ENCODE measurements at regions of chr22 and their contacts with region 1.

Region 1: DNA sequence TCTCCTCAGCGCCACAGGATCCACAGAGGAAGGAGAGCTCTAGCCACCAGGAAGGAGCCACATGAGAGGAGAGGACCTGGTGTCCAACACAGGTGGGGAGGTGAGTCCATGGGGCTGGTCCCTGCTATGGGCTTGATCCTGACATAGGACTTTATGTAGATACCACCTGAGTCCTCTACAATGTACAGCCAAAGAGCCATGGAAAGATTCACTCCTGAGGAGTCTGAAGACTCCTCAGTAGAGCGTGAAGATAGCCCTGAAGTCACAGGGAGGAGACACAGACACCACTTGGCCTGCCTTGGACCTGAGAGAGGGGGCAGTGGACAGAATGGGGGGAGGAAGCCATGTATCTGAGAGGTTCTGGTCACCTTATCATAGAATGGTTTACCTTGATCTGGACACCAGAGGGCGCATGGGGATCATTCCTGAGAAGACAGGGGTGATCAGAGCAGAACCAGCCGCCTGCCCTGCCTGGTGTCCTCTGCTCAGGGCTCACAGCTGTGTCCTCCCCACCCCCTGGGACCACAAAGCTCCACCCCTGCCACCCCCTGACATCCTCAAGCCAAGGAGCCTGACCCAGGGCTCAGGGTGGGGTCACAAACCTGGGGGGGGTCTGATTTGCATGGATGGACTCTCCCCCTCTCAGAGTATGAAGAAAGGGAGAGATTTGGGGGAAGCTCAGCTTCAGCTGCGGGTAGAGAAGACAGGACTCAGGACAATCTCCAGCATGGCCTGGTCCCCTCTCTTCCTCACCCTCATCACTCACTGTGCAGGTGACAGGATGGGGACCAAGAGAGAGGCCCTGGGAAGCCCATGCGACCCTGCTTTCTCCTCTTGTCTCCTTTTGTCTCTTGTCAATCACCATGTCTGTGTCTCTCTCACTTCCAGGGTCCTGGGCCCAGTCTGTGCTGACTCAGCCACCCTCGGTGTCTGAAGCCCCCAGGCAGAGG is 77.0 kb downstream of the ZNF280B start:
- DNase-seq: no peak
- ATAC-seq: peak; percentile 97
- H3K4me3 ChIP-seq: no peak overlapping the region
- H3K27ac ChIP-seq: no peak overlapping the region
- H3K4me1 ChIP-seq: no peaks in the 10 kb centered on the region
- H3K27me3 ChIP-seq: no peaks in the 10 kb centered on the region
- CTCF ChIP-seq: peak; percentile 46 to 62 (median 62)
- EP300 ChIP-seq: no peak
- POLR2A ChIP-seq: no peak
- RAD21 ChIP-seq: peak; percentile 61

Region 2: DNA sequence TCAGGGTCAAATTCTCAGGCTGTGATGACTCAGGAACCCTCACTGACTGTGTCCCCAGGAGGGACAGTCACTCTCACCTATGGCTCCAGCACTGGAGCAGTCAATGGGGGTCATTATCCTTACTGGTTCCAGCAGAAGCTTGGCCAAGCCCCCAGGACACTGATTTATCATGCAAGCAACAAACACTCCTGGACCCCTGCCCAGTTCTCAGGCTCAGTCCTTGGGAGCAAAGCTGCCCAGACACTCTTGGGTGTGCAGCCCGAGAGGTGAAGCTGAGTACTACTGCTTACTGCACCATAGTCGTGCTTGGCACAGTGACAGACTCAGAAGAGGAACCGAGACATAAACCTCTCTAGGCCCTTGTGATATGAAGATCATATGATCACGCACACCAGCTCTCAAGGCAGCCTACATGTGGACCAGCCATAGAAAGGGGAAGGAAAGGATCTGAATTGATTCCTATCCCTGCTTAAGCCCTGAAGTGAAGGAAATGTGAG is 18.8 kb after region 1 on chr22:
- CTCF ChIA-PET with region 1: interaction called, 15 read pairs
- POLR2A ChIA-PET with region 1: no interaction called
- RAD21 ChIA-PET with region 1: interaction called, 12 read pairs
- SMC1A ChIA-PET with region 1: interaction called, 5 read pairs
- in situ Hi-C with region 1: no loop called
- intact Hi-C with region 1: no loop called
- DNase-seq: peak; percentile 55
- ATAC-seq: peak; percentile 100
- H3K4me3 ChIP-seq: no peak overlapping the region
- H3K27ac ChIP-seq: no peak overlapping the region
- H3K4me1 ChIP-seq: peaks cover 9% of the 10 kb centered on the region
- H3K27me3 ChIP-seq: no peaks in the 10 kb centered on the region
- CTCF ChIP-seq: peak in 2 of 3 experiments; percentile 10 to 23; a peak in 2 of 6 replicates
- EP300 ChIP-seq: peak in 1 of 2 experiments; percentile 29; a peak in 2 of 4 replicates
- POLR2A ChIP-seq: no peak
- RAD21 ChIP-seq: no peak

Measured in GM12878 (cell line).